Transverse colon (tissue), 4 donors: ENCODE measurements at regions of chr19 and their contacts with region 1.

Region 1: GRCh38 chr19:46990991-46991676 is 28.5 kb upstream of the NPAS1 start:
- DNase-seq: peak; percentile 86
- H3K4me3 ChIP-seq: no peak overlapping the region
- H3K27ac ChIP-seq: peak overlapping the region; percentile 34 to 55 (median 45)
- H3K4me1 ChIP-seq: peaks cover 0 to 12% (median 2%) of the 10 kb centered on the region in 4 donors
- H3K27me3 ChIP-seq: no peaks in the 10 kb centered on the region
- CTCF ChIP-seq: peak; percentile 72 to 87 (median 86)
- EP300 ChIP-seq: no peak
- POLR2A ChIP-seq: no peak

Region 2: DNA sequence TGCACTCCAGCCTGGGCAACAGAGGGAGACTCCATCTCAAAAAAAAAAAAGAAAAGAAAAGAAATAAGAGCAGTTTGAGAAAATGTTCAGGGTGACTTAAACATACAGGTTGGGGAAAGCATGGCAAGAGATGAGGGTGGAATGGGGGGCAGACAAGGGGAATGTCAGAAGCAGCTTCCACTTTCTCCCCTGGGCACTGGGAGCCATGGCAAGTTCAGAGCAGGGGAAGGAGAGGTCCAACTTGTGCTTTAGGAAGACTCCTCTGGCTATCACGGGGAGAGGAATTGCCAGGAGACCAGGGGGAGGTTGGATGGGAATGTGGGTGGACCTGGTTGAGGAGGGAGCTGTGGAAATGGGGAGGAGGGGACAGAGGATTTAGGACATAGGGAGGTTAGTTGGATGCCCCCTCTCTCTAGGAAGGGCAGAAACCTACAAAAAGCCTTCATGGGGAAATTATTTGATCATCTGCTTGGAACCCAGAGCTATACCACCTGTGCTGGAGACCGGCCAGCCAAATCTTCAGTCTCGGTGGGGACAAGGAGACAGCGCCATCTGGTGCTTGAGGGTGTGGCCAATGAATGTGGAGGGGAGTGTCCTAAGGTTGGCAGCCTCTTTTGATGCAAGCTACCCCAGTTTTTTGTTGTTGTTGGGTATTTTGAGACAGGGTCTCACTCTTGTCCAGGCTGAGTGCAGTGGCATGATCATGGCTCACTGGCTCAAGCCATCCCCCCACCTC is 237.5 kb before region 1 on chr19:
- in situ Hi-C with region 1: loop called in 1 of 4 experiments (anchors 25 kb)
- intact Hi-C with region 1: loop called (anchors 5 kb)
- DNase-seq: peak; percentile 78
- H3K4me3 ChIP-seq: no peak overlapping the region
- H3K27ac ChIP-seq: no peak overlapping the region
- H3K4me1 ChIP-seq: peaks cover 0 to 10% (median 3%) of the 10 kb centered on the region in 4 donors
- H3K27me3 ChIP-seq: no peaks in the 10 kb centered on the region
- CTCF ChIP-seq: peak; percentile 37 to 52 (median 40)
- EP300 ChIP-seq: no peak
- POLR2A ChIP-seq: no peak

Region 3: GRCh38 chr19:46759817-46760333 is 231.3 kb before region 1 on chr19:
- in situ Hi-C with region 1: loop called in 1 of 4 experiments (anchors 25 kb)
- intact Hi-C with region 1: loop called (anchors 5 kb)
- DNase-seq: no peak
- H3K4me3 ChIP-seq: no peak overlapping the region
- H3K27ac ChIP-seq: peak overlapping the region; percentile 44 to 55 (median 48)
- H3K4me1 ChIP-seq: peaks cover 4 to 22% (median 13%) of the 10 kb centered on the region in 4 donors
- H3K27me3 ChIP-seq: no peaks in the 10 kb centered on the region
- CTCF ChIP-seq: no peak
- EP300 ChIP-seq: no peak
- POLR2A ChIP-seq: no peak

Region 4: DNA sequence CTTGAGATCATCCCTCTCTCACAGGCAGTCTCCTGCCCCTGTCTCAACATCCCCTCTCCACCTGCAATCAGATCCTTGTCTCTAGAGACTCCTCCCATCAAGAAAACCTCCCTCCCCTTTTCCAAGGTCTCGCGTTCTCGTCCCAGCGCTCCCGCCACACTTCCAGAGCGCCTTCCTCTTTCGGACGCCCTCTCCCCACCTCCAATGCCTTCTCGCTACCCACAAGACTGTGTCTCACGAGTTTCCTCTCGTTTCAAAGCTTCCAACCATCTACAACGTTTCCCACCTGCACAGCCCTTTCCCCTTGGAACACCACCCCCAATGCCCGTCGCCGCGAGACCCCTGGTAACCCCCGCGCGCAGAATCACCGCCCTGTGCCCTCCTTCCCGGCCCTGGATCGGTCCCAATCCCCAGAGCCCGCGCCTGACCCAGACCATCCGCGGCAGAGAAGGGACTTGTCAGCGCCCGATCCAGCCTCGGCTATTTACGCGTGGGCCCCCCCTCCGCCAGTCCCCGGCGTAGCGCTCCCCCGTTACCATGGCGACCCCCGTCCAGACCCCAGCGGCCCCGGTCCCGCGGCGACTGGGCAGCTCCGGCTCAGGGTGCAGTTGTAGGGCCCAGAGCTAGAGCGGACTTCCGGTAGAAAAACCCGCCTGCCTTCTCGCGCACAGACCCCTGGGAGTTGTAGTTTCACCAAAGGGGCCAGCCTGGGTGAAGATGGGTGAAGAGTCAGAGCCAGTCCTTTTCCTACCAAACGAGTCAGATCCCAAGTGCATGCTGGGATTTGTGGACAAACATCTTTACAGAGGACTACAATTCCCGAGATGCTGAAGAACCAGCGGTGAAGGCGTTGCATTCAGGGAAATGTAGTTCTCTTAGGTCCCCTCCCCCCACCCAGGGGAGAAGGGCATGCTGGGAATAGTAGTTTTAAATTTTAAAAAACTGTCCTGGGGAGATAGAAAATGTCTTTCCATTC is 140.6 kb before region 1 on chr19 and contains the start of gene AP2S1:
- in situ Hi-C with region 1: loop called in 3 of 4 experiments (anchors 5 to 10 kb)
- intact Hi-C with region 1: no loop called
- DNase-seq: peak; percentile 97
- H3K4me3 ChIP-seq: peak within 1 kb of the TSS; percentile 67 to 86 (median 83)
- H3K27ac ChIP-seq: peak within 1 kb of the TSS; percentile 88 to 94 (median 90)
- H3K4me1 ChIP-seq: peaks cover 12 to 46% (median 19%) of the 10 kb centered on the region in 4 donors
- H3K27me3 ChIP-seq: no peaks in the 10 kb centered on the region
- CTCF ChIP-seq: no peak
- EP300 ChIP-seq: no peak
- POLR2A ChIP-seq: peak; percentile 85
- total RNA-seq, gene AP2S1: 50.1 to 96.9 (median 61.2) TPM

Region 5: DNA sequence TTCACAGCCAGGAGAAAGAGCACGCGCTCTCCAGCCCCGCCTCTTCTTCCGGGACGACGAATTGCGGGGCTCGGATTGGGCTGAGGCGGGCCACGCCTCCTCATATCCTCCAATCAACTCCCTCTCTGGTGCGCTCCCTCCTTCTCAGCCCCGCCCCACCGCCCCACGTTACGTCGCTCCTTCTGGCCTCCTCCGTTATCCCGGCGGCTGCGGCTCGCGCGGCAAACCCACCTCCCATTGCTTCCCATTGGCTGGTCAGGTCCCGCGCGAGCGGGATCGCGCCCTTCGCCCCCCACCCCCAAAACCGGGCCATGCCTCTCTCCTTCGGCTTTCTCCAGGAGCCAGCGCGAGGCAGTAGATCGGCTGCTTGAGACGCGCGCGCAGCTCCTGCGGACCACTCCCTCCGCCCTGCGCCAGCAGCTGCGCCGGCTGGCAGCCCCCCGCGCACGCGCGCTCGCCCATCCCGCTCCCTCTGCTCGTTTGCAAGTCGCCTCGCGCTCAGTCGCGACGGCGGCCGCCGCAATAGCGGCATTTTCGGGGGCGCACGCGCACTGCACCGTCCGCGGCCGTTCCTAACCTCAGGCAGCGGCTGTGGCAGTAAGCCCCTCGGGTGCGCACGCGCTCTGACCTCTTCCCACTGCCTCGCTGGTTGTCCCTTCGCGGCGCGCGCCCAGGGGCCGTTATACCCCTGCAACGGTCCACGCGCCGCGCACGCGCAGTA is 130.8 kb before region 1 on chr19:
- in situ Hi-C with region 1: loop called in 3 of 4 experiments (anchors 5 to 10 kb)
- intact Hi-C with region 1: loop called (anchors 2 kb)
- DNase-seq: peak; percentile 98
- H3K4me3 ChIP-seq: peak overlapping the region; percentile 47 to 97 (median 82)
- H3K27ac ChIP-seq: peak overlapping the region; percentile 94 to 100 (median 98)
- H3K4me1 ChIP-seq: peaks cover 18 to 64% (median 48%) of the 10 kb centered on the region in 4 donors
- H3K27me3 ChIP-seq: no peaks in the 10 kb centered on the region
- CTCF ChIP-seq: no peak
- EP300 ChIP-seq: no peak
- POLR2A ChIP-seq: peak; percentile 75

Region 6: GRCh38 chr19:47514869-47515588 is 523.9 kb after region 1 on chr19 and contains the start of gene NAPA:
- in situ Hi-C with region 1: no loop called
- intact Hi-C with region 1: no loop called
- DNase-seq: peak; percentile 100
- H3K4me3 ChIP-seq: peak within 1 kb of the TSS; percentile 82 to 98 (median 92)
- H3K27ac ChIP-seq: peak within 1 kb of the TSS; percentile 95 to 99 (median 98)
- H3K4me1 ChIP-seq: peaks cover 33 to 46% (median 38%) of the 10 kb centered on the region in 4 donors
- H3K27me3 ChIP-seq: no peaks in the 10 kb centered on the region
- CTCF ChIP-seq: no peak
- EP300 ChIP-seq: no peak
- POLR2A ChIP-seq: peak; percentile 99
- total RNA-seq, gene NAPA: 94.8 to 138 (median 114) TPM